Activated CD4-positive, alpha-beta T cell treated with anti-CD3 and anti-CD28 coated beads for 36 hours (primary cell): ENCODE measurements at regions of chr6 and their contacts with region 1.

Region 1: GRCh38 chr6:32177788-32178546 is at the start of gene RNF5:
- DNase-seq: peak; percentile 96
- ATAC-seq: peak; percentile 89
- H3K4me3 Mint-ChIP-seq: peak within 1 kb of the TSS; percentile 92
- H3K27ac Mint-ChIP-seq: peak within 1 kb of the TSS; percentile 98
- H3K4me1 Mint-ChIP-seq: peaks cover 70% of the 10 kb centered on the region
- H3K27me3 Mint-ChIP-seq: no peaks in the 10 kb centered on the region
- total RNA-seq, gene RNF5: 51.7 to 65.6 TPM

Region 2: GRCh38 chr6:31652925-31653718 is 524.8 kb before region 1 on chr6:
- CTCF ChIA-PET with region 1: no interaction called
- POLR2A ChIA-PET with region 1: no interaction called
- intact Hi-C with region 1: loop called in 1 of 2 experiments (anchors 5 kb)
- DNase-seq: peak; percentile 91
- ATAC-seq: peak; percentile 71
- H3K4me3 Mint-ChIP-seq: peak overlapping the region; percentile 88
- H3K27ac Mint-ChIP-seq: peak overlapping the region; percentile 96
- H3K4me1 Mint-ChIP-seq: peaks cover 38% of the 10 kb centered on the region
- H3K27me3 Mint-ChIP-seq: no peaks in the 10 kb centered on the region

Region 3: GRCh38 chr6:31901953-31902643 is 275.9 kb before region 1 on chr6 and contains the start of gene ZBTB12:
- CTCF ChIA-PET with region 1: no interaction called
- POLR2A ChIA-PET with region 1: no interaction called
- intact Hi-C with region 1: loop called in 1 of 2 experiments (anchors 1 kb)
- DNase-seq: peak; percentile 92
- ATAC-seq: peak; percentile 63
- H3K4me3 Mint-ChIP-seq: peak within 1 kb of the TSS; percentile 69
- H3K27ac Mint-ChIP-seq: peak within 1 kb of the TSS; percentile 78
- H3K4me1 Mint-ChIP-seq: peaks cover 25% of the 10 kb centered on the region
- H3K27me3 Mint-ChIP-seq: no peaks in the 10 kb centered on the region
- total RNA-seq, gene ZBTB12: 1.9 to 2.4 TPM

Region 4: DNA sequence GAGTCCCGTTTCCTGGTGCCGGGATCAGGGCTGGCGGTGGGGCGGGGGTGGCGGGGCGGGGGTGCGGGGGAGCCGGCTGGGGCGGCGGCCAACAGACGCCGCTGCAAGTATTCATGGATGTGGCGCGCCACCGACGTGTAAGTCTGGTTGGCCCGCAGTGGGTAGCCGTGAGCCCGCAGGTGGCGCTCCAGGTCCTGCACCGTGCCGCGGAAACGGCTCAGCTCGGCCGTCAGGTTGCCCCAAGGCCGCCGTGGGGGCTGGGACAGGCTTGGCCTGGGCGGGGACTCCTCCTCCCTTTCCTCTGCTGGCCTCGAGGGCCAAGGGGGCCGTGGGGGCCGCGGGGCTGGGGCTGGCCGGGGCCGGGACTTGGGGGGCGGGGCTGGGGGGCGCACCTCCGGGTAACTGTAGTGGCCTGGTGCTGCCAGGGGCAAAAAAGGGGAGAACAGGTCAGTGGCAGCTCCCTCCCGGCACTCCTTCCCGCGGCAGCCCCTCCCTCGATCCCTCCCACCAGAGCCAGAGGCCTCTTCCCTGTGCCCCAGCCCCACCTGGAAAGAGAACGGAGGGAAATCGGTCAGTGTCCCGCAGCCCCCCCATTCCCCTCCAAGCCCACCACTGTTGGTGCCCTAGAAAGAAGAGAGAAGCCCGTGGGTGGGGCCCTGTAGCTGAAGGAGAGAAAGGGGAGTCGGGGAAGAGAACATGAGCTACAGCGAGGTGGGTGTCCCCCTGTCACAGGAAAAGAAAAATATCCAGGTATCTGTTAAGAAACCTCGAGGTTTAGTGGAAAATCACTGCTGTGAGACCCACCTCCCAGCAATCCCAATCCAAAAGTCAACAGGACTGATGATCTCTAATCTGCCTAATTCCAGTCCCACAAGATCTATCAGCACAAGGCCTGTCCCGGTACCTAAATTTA is 90.1 kb before region 1 on chr6:
- CTCF ChIA-PET with region 1: no interaction called
- POLR2A ChIA-PET with region 1: no interaction called
- intact Hi-C with region 1: loop called in 1 of 2 experiments (anchors 1 kb)
- DNase-seq: peak; percentile 89
- ATAC-seq: peak; percentile 93
- H3K4me3 Mint-ChIP-seq: no peak overlapping the region
- H3K27ac Mint-ChIP-seq: no peak overlapping the region
- H3K4me1 Mint-ChIP-seq: peaks cover 9% of the 10 kb centered on the region
- H3K27me3 Mint-ChIP-seq: peaks cover 27% of the 10 kb centered on the region

Region 5: GRCh38 chr6:32153564-32154513 is 24.1 kb before region 1 on chr6 and contains the start of gene PPT2:
- CTCF ChIA-PET with region 1: no interaction called
- POLR2A ChIA-PET with region 1: no interaction called
- intact Hi-C with region 1: loop called (anchors 1 to 2 kb)
- DNase-seq: peak; percentile 88
- ATAC-seq: peak; percentile 76
- H3K4me3 Mint-ChIP-seq: peak within 1 kb of the TSS; percentile 91
- H3K27ac Mint-ChIP-seq: peak within 1 kb of the TSS; percentile 92
- H3K4me1 Mint-ChIP-seq: peaks cover 45% of the 10 kb centered on the region
- H3K27me3 Mint-ChIP-seq: peaks cover 11% of the 10 kb centered on the region
- total RNA-seq, gene PPT2: 9.9 to 10.1 TPM

Region 6: DNA sequence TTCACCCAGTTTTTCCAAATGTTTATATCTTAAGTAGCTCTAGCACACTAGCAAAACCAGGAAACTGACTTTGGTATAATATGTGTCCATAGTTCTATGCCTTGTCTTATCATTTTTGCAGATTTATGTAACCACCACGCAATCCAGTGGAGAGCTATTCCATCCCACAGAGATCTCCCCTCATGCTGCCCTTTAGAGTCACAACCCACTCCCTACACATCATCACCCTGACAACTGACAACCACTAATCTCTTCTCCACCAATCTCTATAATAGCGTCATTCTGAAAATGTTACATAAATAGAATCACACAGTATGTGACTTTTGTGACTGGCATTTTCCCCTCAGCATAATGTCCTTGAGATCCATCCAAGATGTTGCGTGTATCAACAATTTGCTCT is 323.0 kb after region 1 on chr6:
- CTCF ChIA-PET with region 1: no interaction called
- POLR2A ChIA-PET with region 1: no interaction called
- intact Hi-C with region 1: no loop called
- DNase-seq: no peak
- ATAC-seq: peak; percentile 42
- H3K4me3 Mint-ChIP-seq: no peak overlapping the region
- H3K27ac Mint-ChIP-seq: no peak overlapping the region
- H3K4me1 Mint-ChIP-seq: peaks cover 7% of the 10 kb centered on the region
- H3K27me3 Mint-ChIP-seq: peaks cover 10% of the 10 kb centered on the region

Region 7: GRCh38 chr6:32843979-32844838 is 666.2 kb after region 1 on chr6 and contains the start of gene PSMB8:
- CTCF ChIA-PET with region 1: interaction called, 3 read pairs
- POLR2A ChIA-PET with region 1: no interaction called
- intact Hi-C with region 1: loop called (anchors 5 kb)
- DNase-seq: peak; percentile 99
- ATAC-seq: peak; percentile 73
- H3K4me3 Mint-ChIP-seq: peak within 1 kb of the TSS; percentile 95
- H3K27ac Mint-ChIP-seq: peak within 1 kb of the TSS; percentile 97
- H3K4me1 Mint-ChIP-seq: peaks cover 66% of the 10 kb centered on the region
- H3K27me3 Mint-ChIP-seq: no peaks in the 10 kb centered on the region
- total RNA-seq, gene PSMB8: 238 to 338 TPM

Region 8: DNA sequence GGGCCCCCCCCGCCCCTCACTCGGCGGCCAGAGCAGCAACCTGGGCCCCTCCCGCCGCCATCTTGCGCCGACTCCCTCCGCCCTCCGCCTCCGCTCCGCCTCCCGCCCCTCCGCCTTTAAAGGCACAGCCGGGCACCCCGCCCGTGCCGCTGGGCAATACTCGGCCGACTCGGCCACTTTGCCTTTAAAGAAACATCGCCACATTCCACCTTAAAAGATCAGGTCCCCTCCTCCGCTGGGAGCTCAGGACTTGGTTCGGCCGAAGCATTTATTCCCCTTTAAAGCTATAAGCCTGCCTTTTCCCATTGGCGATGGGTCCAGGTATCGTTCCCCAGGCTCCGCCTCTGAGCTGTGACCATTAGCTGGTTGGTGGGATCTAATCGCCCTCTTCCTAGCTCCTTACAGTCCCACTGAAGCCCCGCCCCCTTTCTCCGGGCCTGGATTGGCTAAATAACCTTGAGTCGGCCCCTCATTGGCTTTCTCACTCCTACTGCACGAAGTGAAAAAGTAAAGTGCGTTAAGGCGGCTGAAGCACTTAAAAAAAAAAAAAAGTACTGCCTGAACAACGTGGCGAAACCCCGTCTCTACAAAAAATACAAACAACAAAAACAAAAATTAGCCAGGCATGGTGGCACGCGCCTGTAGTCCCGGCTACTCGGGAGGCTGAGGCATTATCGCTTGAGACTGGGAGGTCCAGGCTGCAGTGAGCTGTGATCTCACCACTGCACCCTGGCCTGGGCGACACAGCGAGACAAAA is 1139.9 kb after region 1 on chr6 and contains the start of gene ZBTB22:
- CTCF ChIA-PET with region 1: no interaction called
- POLR2A ChIA-PET with region 1: no interaction called
- intact Hi-C with region 1: loop called in 1 of 2 experiments (anchors 5 kb)
- DNase-seq: peak; percentile 98
- ATAC-seq: peak; percentile 69
- H3K4me3 Mint-ChIP-seq: peak within 1 kb of the TSS; percentile 80
- H3K27ac Mint-ChIP-seq: peak within 1 kb of the TSS; percentile 93
- H3K4me1 Mint-ChIP-seq: peaks cover 70% of the 10 kb centered on the region
- H3K27me3 Mint-ChIP-seq: no peaks in the 10 kb centered on the region
- total RNA-seq, gene ZBTB22: 9.0 to 9.9 TPM